ENCODE measurements at regions of chr15 and their contacts with region 1.

Region 1: GRCh38 chr15:57298843-57299550 is 77.3 kb upstream of the CGNL1 start:
- DNase-seq: no peak
- ATAC-seq: no peak

Region 2: DNA sequence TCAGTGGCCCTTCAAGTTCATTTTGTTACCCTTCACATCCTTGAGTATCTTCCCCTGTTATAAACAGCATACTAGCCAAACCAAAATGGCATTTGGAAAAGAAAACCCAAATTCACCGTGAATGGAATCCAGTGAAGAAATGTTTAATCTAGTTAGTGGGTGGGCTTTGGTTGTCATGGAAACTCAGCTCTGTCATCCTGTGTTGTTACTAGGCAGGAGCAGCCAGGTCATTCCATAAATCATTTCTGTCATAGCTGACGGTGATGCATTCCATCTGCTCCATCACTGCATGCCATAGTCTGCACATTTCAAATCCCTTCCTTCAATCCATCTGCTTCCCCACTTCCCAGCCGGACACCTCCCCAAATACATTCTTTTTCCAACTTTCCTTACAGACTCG is 63.1 kb before region 1 on chr15:
- intact Hi-C with region 1: loop called (anchors 10 kb)
- DNase-seq: no peak
- ATAC-seq: no peak

Region 3: DNA sequence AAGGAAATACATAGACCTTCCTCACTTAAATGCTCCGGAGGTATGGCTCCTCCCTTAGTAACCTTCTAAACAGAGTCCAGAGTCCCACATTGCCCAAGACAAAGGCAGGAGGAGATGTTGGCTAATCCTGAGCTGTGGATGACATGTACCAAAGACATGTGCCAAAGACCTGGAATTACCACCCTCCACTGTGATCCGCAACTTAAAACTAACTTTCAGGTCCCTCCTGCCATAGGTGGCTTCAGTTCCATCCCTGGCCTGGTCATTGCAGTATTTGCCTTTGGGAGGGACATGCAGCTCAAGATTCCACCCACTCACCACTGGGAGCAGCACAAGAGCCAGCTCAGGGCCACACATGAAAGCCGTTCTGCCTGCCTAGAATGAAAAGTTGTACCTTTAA is 320.7 kb after region 1 on chr15:
- intact Hi-C with region 1: no loop called
- DNase-seq: no peak
- ATAC-seq: peak; percentile 52